Activated B cell treated with CpG ODN at 0.5 μM for 24 hours (primary cell): ENCODE measurements at regions of chr17 and their contacts with region 1.

Region 1: GRCh38 chr17:28071891-28072606 is 29.6 kb downstream of the NLK start:
- DNase-seq: no peak
- ATAC-seq: peak; percentile 66
- H3K4me3 Mint-ChIP-seq: no peak overlapping the region
- H3K27ac Mint-ChIP-seq: peak overlapping the region; percentile 43
- H3K4me1 Mint-ChIP-seq: peaks cover 60% of the 10 kb centered on the region
- H3K27me3 Mint-ChIP-seq: no peaks in the 10 kb centered on the region
- CTCF ChIP-seq: no peak

Region 2: DNA sequence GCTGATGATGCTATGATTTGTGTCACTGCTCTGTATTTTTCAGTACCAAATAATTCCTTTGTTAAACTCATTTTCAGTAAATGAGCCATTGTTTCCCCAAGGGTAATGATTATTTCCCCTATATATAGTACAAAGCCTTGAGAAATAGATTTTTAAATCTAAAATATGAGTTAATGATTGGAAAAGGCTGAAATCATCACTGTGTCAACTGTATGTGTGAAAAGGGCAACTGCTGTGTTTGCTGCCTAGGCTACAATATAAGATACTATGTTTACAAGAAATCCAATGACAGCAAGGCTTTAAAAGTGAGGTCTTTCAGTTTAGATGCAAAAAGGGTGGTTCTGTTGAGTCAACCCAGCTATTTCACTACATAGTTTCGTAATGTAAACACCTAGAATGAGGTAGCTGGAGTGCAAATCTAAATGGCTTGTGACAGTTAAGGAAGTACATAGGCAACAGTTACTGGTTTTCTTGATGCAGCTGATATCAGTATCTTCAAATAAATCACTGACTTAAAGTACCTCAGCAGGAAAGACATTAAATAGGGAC is 14.2 kb before region 1 on chr17:
- CTCF ChIA-PET with region 1: interaction called, 3 read pairs
- POLR2A ChIA-PET with region 1: no interaction called
- intact Hi-C with region 1: loop called (anchors 2 kb)
- DNase-seq: no peak
- ATAC-seq: peak; percentile 49
- H3K4me3 Mint-ChIP-seq: no peak overlapping the region
- H3K27ac Mint-ChIP-seq: peak overlapping the region; percentile 53
- H3K4me1 Mint-ChIP-seq: peaks cover 45% of the 10 kb centered on the region
- H3K27me3 Mint-ChIP-seq: no peaks in the 10 kb centered on the region
- CTCF ChIP-seq: no peak